ENCODE measurements at regions of chr9 and their contacts with region 1.

Region 1: DNA sequence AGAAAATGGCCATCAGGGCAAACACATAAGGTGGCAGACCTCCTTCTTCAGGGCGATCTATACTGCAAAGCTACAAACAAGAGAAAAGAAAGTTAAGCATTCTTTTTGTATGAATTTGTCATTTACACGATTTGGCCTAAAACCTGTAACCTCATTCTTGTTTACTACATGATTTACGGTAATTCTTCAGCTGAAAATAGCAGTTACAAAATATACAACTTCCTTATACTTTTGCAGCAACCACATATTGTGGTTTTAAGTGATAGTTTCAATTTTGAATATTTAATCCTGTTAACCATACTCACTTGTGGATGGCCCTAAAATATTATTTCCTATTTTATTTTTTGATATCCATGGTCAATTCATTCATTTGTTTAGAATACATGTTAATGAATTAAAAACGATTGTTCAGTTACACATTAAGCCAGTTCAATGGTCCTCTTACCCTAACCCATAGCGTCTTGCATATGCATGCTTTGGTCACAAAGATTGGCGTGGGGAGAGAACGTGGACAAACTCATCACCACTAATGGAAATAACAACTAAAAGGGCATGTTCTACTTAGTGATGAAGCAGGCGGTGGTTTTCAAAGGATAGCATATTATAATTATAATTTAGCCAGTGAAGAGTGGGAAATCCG is 16.6 kb downstream of the TUT7 start:
- DNase-seq: no peak
- ATAC-seq: peak; percentile 60
- H3K4me3 Mint-ChIP-seq: peak overlapping the region; percentile 81
- H3K27ac Mint-ChIP-seq: peak overlapping the region; percentile 96
- H3K4me1 Mint-ChIP-seq: peaks cover 43% of the 10 kb centered on the region
- H3K27me3 Mint-ChIP-seq: no peaks in the 10 kb centered on the region

Region 2: DNA sequence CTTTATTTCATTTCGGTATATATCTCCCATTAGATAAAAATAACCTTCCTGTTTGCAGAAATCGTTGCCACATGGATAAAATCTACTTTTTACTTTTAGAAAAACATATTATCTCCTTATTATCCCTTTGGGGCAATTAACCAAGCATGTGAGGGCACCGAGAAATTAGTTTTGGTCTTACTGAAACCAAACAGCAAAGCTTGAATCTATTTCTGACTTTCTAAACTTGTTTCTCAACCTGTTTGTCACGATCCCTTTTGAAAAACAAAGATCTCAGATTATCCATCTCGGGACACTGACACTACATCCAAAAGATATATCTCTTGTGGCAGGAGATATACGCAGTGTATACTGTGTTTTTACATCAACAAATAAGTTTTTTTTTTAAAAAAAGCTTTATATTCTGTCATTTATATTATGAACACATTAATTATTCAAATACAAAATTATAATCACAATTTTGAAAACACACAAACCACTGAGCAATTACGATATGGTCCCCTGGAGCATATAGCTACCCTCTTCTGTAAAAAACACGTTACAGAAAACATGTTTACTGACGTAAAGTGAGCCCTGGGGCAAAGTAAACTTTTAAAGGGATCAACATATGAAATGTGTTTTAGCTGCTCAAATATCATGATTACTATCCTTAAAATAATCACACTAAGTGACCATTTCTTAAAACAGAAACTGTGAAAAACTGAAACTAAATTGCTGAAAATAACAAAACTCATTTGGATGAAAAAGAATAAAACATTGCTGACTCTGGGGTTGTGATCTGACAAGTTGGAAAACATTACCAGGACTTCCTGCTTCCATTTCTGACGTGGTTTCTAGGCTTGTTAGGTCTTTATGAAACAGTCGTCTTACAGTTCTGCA is 14.5 kb after region 1 on chr9:
- CTCF ChIA-PET with region 1: interaction called, 33 read pairs
- DNase-seq: no peak
- ATAC-seq: peak; percentile 24
- H3K4me3 Mint-ChIP-seq: peak overlapping the region; percentile 100
- H3K27ac Mint-ChIP-seq: peak overlapping the region; percentile 97
- H3K4me1 Mint-ChIP-seq: peaks cover 35% of the 10 kb centered on the region
- H3K27me3 Mint-ChIP-seq: no peaks in the 10 kb centered on the region